GM10248 (cell line): ENCODE measurements at regions of chr1 and their contacts with region 1.

Region 1: GRCh38 chr1:203340112-203340804 is 10.7 kb downstream of the FMOD start:
- DNase-seq: peak; percentile 84
- CTCF ChIP-seq: peak; percentile 93

Region 2: DNA sequence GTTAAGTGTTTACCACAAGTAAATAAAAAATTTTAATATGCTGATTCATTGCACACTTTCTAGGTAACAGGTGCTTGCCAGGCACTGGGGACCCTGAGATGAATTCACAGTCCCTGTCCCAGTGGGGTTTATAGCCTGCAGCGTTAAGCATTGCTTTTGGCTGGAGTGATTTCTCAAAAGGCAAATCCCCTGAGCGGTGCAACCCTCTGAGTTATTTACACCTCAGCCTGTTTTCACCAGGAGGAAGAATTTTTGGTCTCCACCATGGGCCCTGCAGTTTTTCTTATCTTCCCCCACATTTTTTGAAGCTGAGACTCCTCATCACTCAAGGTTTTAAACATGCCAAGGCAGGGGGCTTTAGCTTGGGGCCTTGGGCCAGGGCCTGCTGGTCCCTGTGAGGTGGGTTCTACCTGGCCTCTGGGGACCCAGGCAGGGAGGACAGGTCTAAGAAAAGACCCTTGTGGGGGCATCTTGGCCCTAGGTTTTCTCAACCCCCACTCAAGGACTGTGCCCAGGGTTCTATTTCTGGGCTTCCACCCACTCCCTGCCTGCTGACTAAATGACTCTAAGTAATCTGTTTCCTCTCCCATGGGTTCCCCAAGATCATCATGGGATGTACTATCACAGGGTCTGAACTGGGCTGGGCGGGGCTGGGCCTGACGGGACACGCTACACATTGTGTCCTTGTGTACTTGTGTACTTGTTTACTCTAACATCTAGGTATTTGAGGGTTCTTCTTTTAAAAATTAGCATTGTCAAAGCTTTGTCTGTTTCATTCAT is 100.5 kb before region 1 on chr1:
- CTCF ChIA-PET with region 1: no interaction called
- POLR2A ChIA-PET with region 1: no interaction called
- DNase-seq: peak; percentile 12
- CTCF ChIP-seq: no peak

Region 3: GRCh38 chr1:203290261-203291089 is 49.8 kb before region 1 on chr1:
- CTCF ChIA-PET with region 1: interaction called, 282 read pairs
- POLR2A ChIA-PET with region 1: no interaction called
- DNase-seq: peak; percentile 91
- CTCF ChIP-seq: no peak

Region 4: GRCh38 chr1:203326830-203327683 is 13.2 kb before region 1 on chr1:
- CTCF ChIA-PET with region 1: interaction called, 181 read pairs
- POLR2A ChIA-PET with region 1: no interaction called
- DNase-seq: peak; percentile 95
- CTCF ChIP-seq: peak; percentile 1

Region 5: GRCh38 chr1:203378556-203379245 is 38.4 kb after region 1 on chr1:
- CTCF ChIA-PET with region 1: interaction called, 11 read pairs
- POLR2A ChIA-PET with region 1: no interaction called
- DNase-seq: no peak
- CTCF ChIP-seq: no peak

Region 6: DNA sequence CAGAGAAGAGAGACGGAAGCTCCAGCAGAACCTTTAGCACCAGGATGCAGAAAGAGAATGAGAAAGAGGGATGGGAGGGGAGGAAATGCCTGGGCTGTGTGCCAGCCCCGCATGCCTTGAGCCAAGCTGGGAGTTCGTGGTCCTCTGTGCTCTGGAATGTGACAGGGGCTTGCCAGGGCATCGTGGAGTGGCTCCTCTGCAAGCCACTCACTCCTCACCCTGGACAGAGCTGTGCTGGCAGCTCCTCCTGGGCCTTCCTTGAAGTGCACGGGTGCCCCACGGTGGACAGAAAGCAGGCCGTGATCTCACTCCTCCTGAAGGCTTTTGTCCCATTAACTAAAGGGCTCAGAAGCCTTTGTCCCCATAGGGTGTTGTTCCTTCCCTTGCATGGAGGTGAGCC is 100.5 kb after region 1 on chr1:
- CTCF ChIA-PET with region 1: interaction called, 148 read pairs
- POLR2A ChIA-PET with region 1: no interaction called
- DNase-seq: peak; percentile 45
- CTCF ChIP-seq: peak; percentile 43

Region 7: GRCh38 chr1:203463469-203464062 is 123.3 kb after region 1 on chr1:
- CTCF ChIA-PET with region 1: interaction called, 12 read pairs
- POLR2A ChIA-PET with region 1: no interaction called
- DNase-seq: no peak
- CTCF ChIP-seq: no peak

Region 8: DNA sequence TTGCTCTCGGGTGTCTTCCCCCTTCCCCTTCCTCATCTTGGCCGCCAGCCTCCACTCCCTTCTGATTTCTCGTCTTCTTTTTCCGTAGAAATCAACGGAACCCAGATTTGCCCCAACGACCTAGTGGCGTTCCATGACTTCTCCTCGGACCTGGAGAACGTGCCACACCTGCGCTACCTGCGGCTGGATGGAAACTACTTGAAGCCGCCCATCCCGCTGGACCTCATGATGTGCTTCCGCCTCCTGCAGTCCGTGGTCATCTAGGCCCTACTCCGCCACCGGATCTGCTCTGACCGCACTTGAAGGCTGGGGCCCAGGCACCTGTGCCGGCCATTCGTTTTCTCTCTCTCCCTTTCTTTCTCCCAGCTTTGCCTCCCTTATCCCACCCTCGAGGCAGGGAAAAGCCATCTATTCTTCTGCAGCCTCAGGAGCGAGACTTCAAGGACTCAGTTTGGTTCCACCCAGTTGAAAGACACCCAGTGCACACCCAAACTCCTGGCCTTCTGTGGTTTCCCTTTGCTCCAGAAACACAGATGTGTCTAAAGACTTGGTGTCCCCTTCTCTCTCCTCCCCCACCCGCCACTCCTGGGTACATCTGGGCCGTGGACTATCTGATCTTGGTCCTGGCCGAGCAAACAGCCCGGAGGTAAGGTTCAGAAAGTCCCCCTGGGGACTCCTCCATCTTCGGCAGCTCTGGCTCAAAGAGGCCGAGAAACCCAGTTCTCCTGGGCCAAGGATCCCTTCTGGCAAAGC is 146.5 kb after region 1 on chr1:
- CTCF ChIA-PET with region 1: interaction called, 191 read pairs
- POLR2A ChIA-PET with region 1: no interaction called
- DNase-seq: no peak
- CTCF ChIP-seq: no peak